ENCODE measurements at regions of chr22 and their contacts with region 1.

Region 1: GRCh38 chr22:21001560-21002325 is at the start of gene THAP7:
- DNase-seq: peak; percentile 99
- H3K4me3 ChIP-seq: peak within 1 kb of the TSS; percentile 70 to 91 (median 78)
- H3K27ac ChIP-seq: peak within 1 kb of the TSS; percentile 98 to 100 (median 99)
- H3K4me1 ChIP-seq: peaks cover 31 to 47% (median 37%) of the 10 kb centered on the region in 4 donors
- H3K27me3 ChIP-seq: no peaks in the 10 kb centered on the region
- CTCF ChIP-seq: no peak
- EP300 ChIP-seq: no peak
- POLR2A ChIP-seq: peak; percentile 78
- total RNA-seq, gene THAP7: 33.2 to 42.4 (median 39.1) TPM

Region 2: GRCh38 chr22:20899827-20900423 is 101.8 kb before region 1 on chr22:
- intact Hi-C with region 1: no loop called
- DNase-seq: no peak
- H3K4me3 ChIP-seq: no peak overlapping the region
- H3K27ac ChIP-seq: no peak overlapping the region
- H3K4me1 ChIP-seq: no peaks in the 10 kb centered on the region
- H3K27me3 ChIP-seq: no peaks in the 10 kb centered on the region
- CTCF ChIP-seq: no peak
- EP300 ChIP-seq: no peak
- POLR2A ChIP-seq: no peak

Region 3: DNA sequence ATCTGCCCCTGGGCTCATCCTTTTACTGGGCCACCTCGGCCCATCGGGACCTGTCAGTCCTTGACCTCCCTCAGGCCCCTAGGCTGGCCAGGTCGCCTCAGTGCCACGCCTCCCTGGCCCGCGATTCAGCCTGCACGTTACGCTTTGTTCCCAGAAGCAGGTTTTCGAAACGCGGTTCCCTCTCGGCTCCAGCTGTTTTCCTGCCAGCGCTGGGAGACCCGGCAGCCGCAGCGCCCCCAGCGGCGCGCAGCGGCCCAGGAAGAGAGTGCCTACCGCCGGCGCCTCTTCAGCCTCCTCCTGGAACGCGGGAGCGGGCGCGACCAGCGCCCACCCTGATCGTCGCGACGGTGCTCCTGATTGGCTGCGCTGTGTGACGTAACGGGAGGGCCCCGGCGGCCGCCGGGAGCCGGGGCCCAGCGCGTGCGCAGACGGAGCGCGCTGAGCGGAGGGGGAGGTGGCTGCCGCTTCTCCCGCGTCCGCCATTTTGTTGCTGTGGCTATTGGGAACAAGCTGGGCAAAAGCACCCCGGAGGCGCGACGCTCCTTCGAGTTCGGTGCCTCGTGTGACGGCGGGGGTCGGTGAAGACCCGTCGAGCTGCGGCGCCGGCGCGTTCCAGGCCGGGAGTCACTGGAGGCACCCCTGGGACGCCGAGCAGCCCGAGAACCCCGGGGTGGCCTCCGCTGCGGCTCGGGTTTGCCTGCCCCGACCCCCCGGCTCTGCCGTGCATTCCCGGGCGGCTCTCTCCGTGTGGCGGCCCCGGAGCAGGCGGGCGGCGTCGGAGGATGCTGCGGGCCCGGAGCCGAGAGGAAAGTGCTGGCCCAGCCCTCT is 84.5 kb before region 1 on chr22 and contains the start of gene CRKL:
- intact Hi-C with region 1: loop called (anchors 5 kb)
- DNase-seq: peak; percentile 99
- H3K4me3 ChIP-seq: peak within 1 kb of the TSS; percentile 69 to 100 (median 82)
- H3K27ac ChIP-seq: peak within 1 kb of the TSS; percentile 93 to 97 (median 96)
- H3K4me1 ChIP-seq: peaks cover 25 to 41% (median 38%) of the 10 kb centered on the region in 4 donors
- H3K27me3 ChIP-seq: no peaks in the 10 kb centered on the region
- CTCF ChIP-seq: peak; percentile 91 to 98 (median 93)
- EP300 ChIP-seq: no peak
- POLR2A ChIP-seq: peak; percentile 93
- total RNA-seq, gene CRKL: 34.9 to 56.2 (median 47.9) TPM

Region 4: DNA sequence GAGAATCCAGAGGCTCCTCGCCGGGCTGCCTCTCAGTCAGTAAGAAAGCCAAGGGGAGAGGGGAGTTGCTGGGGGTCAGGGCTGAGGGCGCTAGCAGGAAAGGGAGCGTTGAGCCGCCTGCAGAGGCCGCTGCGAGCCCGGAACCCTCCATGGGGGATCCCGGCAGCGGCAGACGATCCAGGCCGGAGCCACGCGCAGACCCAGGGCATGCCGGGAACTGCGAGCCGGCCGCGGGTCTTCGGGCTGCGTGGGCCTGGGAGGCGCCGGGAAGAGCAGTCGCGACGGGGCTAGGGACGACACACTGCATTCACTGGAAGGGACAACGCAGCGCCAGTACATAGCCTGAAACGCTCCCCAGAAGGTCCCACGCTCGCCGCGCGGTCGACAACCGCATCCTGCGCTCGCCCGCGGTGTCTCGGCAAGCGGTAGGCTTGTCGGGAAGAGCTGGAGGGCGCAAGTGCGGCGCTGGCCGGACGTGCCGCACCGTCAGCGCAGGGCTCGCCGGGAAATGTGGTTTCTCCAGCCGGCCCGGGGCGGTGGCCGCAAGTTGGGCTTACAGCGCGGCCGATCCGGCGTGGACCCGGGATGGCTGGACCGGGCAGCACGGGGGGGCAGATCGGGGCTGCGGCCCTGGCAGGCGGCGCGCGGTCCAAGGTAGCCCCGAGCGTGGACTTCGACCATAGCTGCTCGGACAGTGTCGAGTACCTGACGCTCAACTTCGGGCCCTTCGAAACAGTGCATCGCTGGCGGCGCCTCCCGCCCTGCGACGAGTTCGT is 19.8 kb before region 1 on chr22 and contains the start of gene LZTR1:
- intact Hi-C with region 1: loop called (anchors 2 kb)
- DNase-seq: peak; percentile 93
- H3K4me3 ChIP-seq: peak within 1 kb of the TSS; percentile 75 to 97 (median 82)
- H3K27ac ChIP-seq: peak within 1 kb of the TSS; percentile 91 to 95 (median 94)
- H3K4me1 ChIP-seq: peaks cover 34 to 45% (median 43%) of the 10 kb centered on the region in 4 donors
- H3K27me3 ChIP-seq: no peaks in the 10 kb centered on the region
- CTCF ChIP-seq: peak; percentile 60 to 70 (median 67)
- EP300 ChIP-seq: no peak
- POLR2A ChIP-seq: peak; percentile 89
- total RNA-seq, gene LZTR1: 42.4 to 76.3 (median 57.2) TPM